ENCODE measurements at regions of chr12 and their contacts with region 1.

Region 1: DNA sequence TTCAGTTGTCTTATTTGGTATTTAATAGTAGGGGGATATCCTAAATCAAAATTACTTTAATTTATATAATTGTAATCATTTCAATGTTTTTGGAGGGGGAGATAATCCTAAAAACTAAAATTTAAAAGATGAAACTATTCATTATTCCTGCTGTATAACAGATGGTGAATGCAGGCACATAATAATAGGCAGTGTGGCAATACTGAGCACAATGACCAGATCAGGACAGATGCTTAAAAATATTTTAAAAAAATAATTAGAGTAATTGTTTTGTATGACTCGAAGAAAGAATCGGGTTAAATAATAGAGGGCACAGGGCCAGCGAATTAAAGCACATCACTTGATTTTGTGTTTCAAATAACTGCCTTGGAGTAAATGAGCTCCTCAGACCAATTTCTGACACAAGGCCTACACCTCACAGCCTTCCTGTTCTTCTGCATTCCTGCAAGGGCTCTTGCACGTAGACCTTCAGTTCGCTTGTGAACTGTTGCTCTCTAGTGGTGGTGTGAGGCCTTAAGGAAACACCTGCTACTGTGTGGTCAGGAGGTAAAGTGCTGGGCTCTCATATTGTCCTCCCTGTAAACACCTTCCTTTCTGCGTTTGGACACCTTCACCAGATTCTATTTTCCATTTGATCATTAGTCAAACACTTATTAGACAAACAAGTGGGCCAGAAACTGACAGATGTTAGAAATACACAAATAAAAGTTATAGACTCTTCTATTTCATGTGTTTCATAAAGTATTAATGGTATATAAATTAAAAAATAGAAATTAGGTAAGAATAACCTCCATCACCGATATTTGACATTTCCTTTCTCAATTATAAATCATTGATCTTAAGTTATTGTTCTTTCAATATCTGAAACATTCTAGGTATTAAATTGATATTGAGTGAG is 29.3 kb upstream of the KLRF1 start:
- DNase-seq: peak; percentile 85
- H3K4me3 Mint-ChIP-seq: peak overlapping the region; percentile 65
- H3K27ac Mint-ChIP-seq: peak overlapping the region; percentile 88
- H3K4me1 Mint-ChIP-seq: peaks cover 46% of the 10 kb centered on the region
- H3K27me3 Mint-ChIP-seq: peaks cover 10% of the 10 kb centered on the region

Region 2: GRCh38 chr12:9741726-9742125 is 56.2 kb before region 1 on chr12:
- CTCF ChIA-PET with region 1: interaction called, 120 read pairs
- POLR2A ChIA-PET with region 1: no interaction called
- DNase-seq: peak; percentile 89
- H3K4me3 Mint-ChIP-seq: peak overlapping the region; percentile 73
- H3K27ac Mint-ChIP-seq: peak overlapping the region; percentile 95
- H3K4me1 Mint-ChIP-seq: peaks cover 75% of the 10 kb centered on the region
- H3K27me3 Mint-ChIP-seq: no peaks in the 10 kb centered on the region

Region 3: GRCh38 chr12:9750276-9751203 is 47.4 kb before region 1 on chr12:
- CTCF ChIA-PET with region 1: interaction called, 120 read pairs
- POLR2A ChIA-PET with region 1: interaction called, 125 read pairs
- DNase-seq: peak; percentile 74
- H3K4me3 Mint-ChIP-seq: peak overlapping the region; percentile 58
- H3K27ac Mint-ChIP-seq: peak overlapping the region; percentile 80
- H3K4me1 Mint-ChIP-seq: peaks cover 60% of the 10 kb centered on the region
- H3K27me3 Mint-ChIP-seq: no peaks in the 10 kb centered on the region

Region 4: GRCh38 chr12:9808504-9808903 is 10.5 kb after region 1 on chr12:
- CTCF ChIA-PET with region 1: interaction called, 13 read pairs
- POLR2A ChIA-PET with region 1: interaction called, 3 read pairs
- DNase-seq: no peak
- H3K4me3 Mint-ChIP-seq: no peak overlapping the region
- H3K27ac Mint-ChIP-seq: no peak overlapping the region
- H3K4me1 Mint-ChIP-seq: peaks cover 25% of the 10 kb centered on the region
- H3K27me3 Mint-ChIP-seq: peaks cover 27% of the 10 kb centered on the region

Region 5: GRCh38 chr12:9813821-9814809 is 16.1 kb after region 1 on chr12:
- CTCF ChIA-PET with region 1: interaction called, 13 read pairs
- POLR2A ChIA-PET with region 1: no interaction called
- DNase-seq: peak; percentile 95
- H3K4me3 Mint-ChIP-seq: peak overlapping the region; percentile 79
- H3K27ac Mint-ChIP-seq: peak overlapping the region; percentile 89
- H3K4me1 Mint-ChIP-seq: peaks cover 37% of the 10 kb centered on the region
- H3K27me3 Mint-ChIP-seq: peaks cover 8% of the 10 kb centered on the region

Measured in activated CD4-positive, alpha-beta T cell treated with anti-CD3 and anti-CD28 coated beads, Interleukin-2, amount 10 ng/mL, durations not matched to agents 7 days and 5 days (primary cell).